CD8-positive, alpha-beta T cell (primary cell): ENCODE measurements at regions of chrX and their contacts with region 1.

Region 1: GRCh38 chrX:12974796-12975669 is at the start of gene TMSB4X:
- DNase-seq: peak; percentile 65 to 90 (median 81)
- ATAC-seq: peak; percentile 45
- H3K4me3 ChIP-seq: peak within 1 kb of the TSS; percentile 95 to 98
- H3K4me3 Mint-ChIP-seq: peak within 1 kb of the TSS; percentile 96
- H3K27ac ChIP-seq: peak within 1 kb of the TSS; percentile 87 to 99
- H3K27ac Mint-ChIP-seq: peak within 1 kb of the TSS; percentile 96
- H3K4me1 ChIP-seq: peaks cover 15% of the 10 kb centered on the region
- H3K4me1 Mint-ChIP-seq: peaks cover 32% of the 10 kb centered on the region
- H3K27me3 ChIP-seq: no peaks in the 10 kb centered on the region
- H3K27me3 Mint-ChIP-seq: no peaks in the 10 kb centered on the region
- CTCF ChIP-seq: no peak
- total RNA-seq, gene TMSB4X: 2,374 to 2,465 TPM

Region 2: DNA sequence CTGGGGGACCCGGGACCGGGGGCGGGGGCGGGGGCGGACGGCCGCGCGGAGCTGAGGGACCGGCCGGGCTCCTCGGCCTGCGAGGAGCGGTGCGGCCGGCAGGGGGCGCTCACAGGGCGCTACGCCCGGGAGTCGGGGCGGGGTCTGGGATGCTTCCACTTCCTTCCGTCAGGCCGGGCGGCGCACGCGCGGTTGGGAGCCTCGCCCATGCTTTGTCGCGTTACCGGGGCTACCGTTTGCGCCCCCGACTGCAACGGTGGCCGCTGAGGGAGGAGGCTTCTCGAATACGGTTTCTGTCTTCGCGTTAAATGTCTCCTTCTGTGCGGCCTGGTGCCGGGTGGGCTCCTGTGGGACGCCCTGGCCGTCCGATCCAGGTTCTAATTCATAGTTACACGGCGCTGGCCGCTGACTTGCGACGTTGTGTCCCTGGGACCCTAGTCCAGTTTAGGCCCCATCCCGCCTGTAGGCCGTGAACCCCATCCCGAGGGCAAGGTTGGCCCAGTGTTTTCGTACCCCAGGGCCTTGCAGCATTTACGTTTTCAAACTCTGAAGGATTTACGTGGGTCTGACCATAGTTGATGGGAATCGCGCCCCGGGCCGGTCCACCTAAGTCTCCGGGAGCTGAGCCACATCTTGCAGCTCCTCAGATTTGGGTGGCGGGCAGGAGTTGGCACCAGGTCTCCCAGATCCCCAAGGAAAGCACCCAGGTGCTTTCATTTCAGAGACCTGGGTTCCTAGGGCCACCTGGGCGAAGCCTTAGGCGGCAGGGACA is 1216.4 kb before region 1 on chrX:
- CTCF ChIA-PET with region 1: no interaction called
- POLR2A ChIA-PET with region 1: no interaction called
- intact Hi-C with region 1: loop called in 1 of 2 experiments (anchors 10 kb)
- DNase-seq: peak; percentile 76 to 93 (median 89)
- ATAC-seq: peak; percentile 61
- H3K4me3 ChIP-seq: peak overlapping the region; percentile 76 to 91
- H3K4me3 Mint-ChIP-seq: peak overlapping the region; percentile 88
- H3K27ac ChIP-seq: peak overlapping the region; percentile 87 to 93
- H3K27ac Mint-ChIP-seq: peak overlapping the region; percentile 97
- H3K4me1 ChIP-seq: peaks cover 18% of the 10 kb centered on the region
- H3K4me1 Mint-ChIP-seq: peaks cover 34% of the 10 kb centered on the region
- H3K27me3 ChIP-seq: no peaks in the 10 kb centered on the region
- H3K27me3 Mint-ChIP-seq: no peaks in the 10 kb centered on the region
- CTCF ChIP-seq: peak; percentile 62

Region 3: DNA sequence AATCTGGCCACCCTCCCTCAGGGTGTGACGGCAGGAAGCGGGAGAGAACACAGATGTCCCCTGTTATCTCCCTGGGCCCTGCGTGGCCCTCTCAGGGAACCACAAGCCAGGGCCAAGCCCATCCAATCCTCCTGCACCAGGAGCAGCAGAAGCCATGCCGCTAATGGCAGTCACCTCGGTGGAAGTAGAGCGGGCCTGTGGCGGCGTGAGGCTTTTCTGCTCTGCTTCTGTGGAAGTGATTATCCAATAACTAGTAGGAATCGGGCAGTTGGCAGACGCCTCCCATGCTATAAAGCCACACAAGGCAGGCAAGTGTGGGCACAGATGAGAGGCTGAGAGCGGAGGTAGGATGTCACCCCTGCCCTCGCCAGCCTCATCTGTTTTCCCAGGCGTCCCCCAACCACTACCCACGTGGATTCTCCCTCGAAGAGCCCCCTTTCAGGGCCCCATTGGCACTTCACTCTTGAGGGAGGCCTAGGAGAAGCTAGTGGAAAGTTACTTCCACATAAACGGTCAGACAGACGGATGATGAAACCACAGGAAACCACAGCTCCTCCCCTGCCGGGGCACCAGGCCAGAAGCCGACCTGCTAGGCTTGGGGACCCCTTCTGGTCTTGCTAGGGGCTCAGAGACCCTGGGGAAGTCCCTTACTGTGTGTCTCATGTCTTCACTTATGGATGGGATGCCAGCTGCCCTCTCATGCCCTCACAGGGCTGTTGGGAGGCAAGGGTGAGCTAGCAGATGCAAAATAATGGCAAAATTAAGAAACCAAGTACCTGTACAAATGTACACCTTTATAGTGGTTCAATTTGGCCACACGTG is 18.9 kb before region 1 on chrX:
- CTCF ChIA-PET with region 1: interaction called, 71 read pairs
- POLR2A ChIA-PET with region 1: interaction called, 559 read pairs
- intact Hi-C with region 1: loop called in 1 of 2 experiments (anchors 1 kb)
- DNase-seq: peak in 8 of 9 experiments; percentile 50 to 83 (median 68)
- ATAC-seq: peak; percentile 22
- H3K4me3 ChIP-seq: peak overlapping the region; percentile 34 to 43
- H3K4me3 Mint-ChIP-seq: peak overlapping the region; percentile 79
- H3K27ac ChIP-seq: peak overlapping the region; percentile 62 to 89
- H3K27ac Mint-ChIP-seq: peak overlapping the region; percentile 99
- H3K4me1 ChIP-seq: peaks cover 79% of the 10 kb centered on the region
- H3K4me1 Mint-ChIP-seq: peaks cover 74% of the 10 kb centered on the region
- H3K27me3 ChIP-seq: no peaks in the 10 kb centered on the region
- H3K27me3 Mint-ChIP-seq: no peaks in the 10 kb centered on the region
- CTCF ChIP-seq: no peak

Region 4: DNA sequence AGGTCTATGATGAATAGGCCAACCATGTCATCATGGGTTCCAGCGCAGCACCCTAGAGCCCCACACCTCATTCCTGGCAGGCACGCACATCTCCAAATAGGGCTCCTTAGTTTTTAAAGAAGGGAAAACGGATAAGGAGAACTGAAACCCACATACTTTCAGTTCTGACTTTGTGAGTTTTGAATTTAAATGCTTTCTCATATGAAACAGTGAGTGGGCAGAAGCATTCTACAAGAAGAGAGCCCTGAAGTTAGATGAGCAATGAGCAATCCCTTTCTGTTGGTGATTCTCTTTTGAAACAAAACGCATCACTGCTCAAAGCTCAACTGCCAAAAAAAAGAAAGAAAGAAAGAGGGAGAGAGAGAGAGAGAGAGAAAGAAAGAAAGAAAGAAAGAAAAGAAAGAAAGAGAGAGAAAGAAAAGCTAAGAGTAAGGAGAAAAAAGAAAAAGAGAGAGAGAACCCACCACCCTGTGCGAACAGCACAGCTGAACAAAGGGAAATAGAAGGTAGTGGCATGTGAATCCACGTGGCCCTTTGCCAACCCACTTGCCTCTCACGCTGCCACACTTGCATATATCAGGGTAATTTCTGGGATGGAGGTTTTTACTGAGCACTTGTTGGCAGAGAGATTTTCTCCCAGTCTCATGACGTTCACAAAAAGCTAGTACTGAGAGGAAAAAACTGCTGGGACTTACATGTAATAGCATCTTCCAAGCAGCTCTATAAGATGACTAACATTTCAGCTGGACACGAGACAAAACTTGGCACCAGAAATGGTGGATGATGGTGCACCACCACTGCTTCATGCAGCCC is 30.8 kb after region 1 on chrX:
- CTCF ChIA-PET with region 1: interaction called, 8 read pairs
- POLR2A ChIA-PET with region 1: interaction called, 95 read pairs
- intact Hi-C with region 1: loop called in 1 of 2 experiments (anchors 5 kb)
- DNase-seq: peak in 3 of 9 experiments; percentile 29 to 62 (median 43)
- ATAC-seq: peak; percentile 51
- H3K4me3 ChIP-seq: peak overlapping the region; percentile 1 to 3
- H3K4me3 Mint-ChIP-seq: peak overlapping the region; percentile 80
- H3K27ac ChIP-seq: peak overlapping the region in 1 of 2 experiments; percentile 58
- H3K27ac Mint-ChIP-seq: peak overlapping the region; percentile 98
- H3K4me1 ChIP-seq: peaks cover 66% of the 10 kb centered on the region
- H3K4me1 Mint-ChIP-seq: peaks cover 69% of the 10 kb centered on the region
- H3K27me3 ChIP-seq: no peaks in the 10 kb centered on the region
- H3K27me3 Mint-ChIP-seq: no peaks in the 10 kb centered on the region
- CTCF ChIP-seq: no peak

Region 5: GRCh38 chrX:13029341-13029740 is 54.3 kb after region 1 on chrX:
- CTCF ChIA-PET with region 1: interaction called, 7 read pairs
- POLR2A ChIA-PET with region 1: interaction called, 21 read pairs
- intact Hi-C with region 1: loop called in 1 of 2 experiments (anchors 5 kb)
- DNase-seq: peak in 5 of 9 experiments; percentile 18 to 50 (median 24)
- ATAC-seq: no peak
- H3K4me3 ChIP-seq: peak overlapping the region in 1 of 2 experiments; percentile 5
- H3K4me3 Mint-ChIP-seq: peak overlapping the region; percentile 54
- H3K27ac ChIP-seq: peak overlapping the region; percentile 30 to 56
- H3K27ac Mint-ChIP-seq: peak overlapping the region; percentile 96
- H3K4me1 ChIP-seq: peaks cover 69% of the 10 kb centered on the region
- H3K4me1 Mint-ChIP-seq: peaks cover 73% of the 10 kb centered on the region
- H3K27me3 ChIP-seq: no peaks in the 10 kb centered on the region
- H3K27me3 Mint-ChIP-seq: no peaks in the 10 kb centered on the region
- CTCF ChIP-seq: no peak

Region 6: DNA sequence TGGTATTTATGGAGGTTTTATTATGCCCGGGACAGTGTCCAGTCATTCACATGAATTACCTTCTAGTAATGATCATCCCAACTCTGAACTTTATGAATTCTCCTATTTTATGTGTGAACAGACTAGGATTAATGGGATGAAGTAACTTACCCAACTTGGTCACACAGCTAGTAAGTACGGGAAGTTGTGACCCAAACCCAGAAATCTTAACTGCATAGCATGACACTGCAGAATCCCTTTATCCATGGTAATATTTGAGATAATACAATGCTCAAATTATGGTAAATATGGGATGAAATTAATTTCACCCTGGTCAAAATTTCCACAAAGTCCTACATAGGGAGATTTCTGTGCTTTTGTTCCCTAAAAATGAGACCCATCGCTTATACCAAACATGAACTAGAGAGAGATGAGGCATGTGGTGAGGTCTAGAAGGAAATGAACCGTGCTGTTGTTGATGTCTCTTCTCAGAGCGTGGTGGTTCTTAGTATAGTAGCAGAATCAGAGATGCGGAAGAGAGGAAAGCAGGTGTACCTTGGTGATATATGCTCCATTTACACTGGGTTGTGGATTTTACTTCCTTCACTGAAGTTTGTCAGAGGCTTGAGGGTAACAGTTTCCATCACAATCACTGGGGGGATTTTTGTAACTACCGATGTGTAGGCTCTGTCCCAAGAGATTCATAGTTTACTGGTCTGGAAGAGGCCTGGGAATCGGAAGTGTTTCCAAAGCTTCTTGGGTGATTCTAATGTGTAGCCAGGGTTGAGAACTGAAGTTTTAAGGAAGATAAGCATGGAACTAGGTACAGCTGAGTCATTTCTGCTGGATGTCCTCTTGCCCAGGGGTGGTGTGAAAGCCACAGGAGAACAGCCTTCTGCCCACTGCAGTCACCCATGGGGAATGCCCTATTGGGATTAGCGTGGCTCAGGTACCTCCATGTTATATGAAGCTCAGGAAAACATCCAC is 99.5 kb after region 1 on chrX:
- CTCF ChIA-PET with region 1: interaction called, 3 read pairs
- POLR2A ChIA-PET with region 1: interaction called, 13 read pairs
- intact Hi-C with region 1: no loop called
- DNase-seq: peak in 2 of 9 experiments; percentile 43 to 65
- ATAC-seq: peak; percentile 91
- H3K4me3 ChIP-seq: no peak overlapping the region
- H3K4me3 Mint-ChIP-seq: peak overlapping the region; percentile 1
- H3K27ac ChIP-seq: peak overlapping the region in 1 of 2 experiments; percentile 48
- H3K27ac Mint-ChIP-seq: peak overlapping the region; percentile 93
- H3K4me1 ChIP-seq: peaks cover 63% of the 10 kb centered on the region
- H3K4me1 Mint-ChIP-seq: peaks cover 52% of the 10 kb centered on the region
- H3K27me3 ChIP-seq: no peaks in the 10 kb centered on the region
- H3K27me3 Mint-ChIP-seq: no peaks in the 10 kb centered on the region
- CTCF ChIP-seq: no peak

Region 7: GRCh38 chrX:13087322-13088155 is 112.5 kb after region 1 on chrX:
- CTCF ChIA-PET with region 1: interaction called, 66 read pairs
- POLR2A ChIA-PET with region 1: interaction called, 518 read pairs
- intact Hi-C with region 1: loop called (anchors 1 to 2 kb)
- DNase-seq: peak in 7 of 9 experiments; percentile 41 to 94 (median 75)
- ATAC-seq: peak; percentile 60
- H3K4me3 ChIP-seq: peak overlapping the region in 1 of 2 experiments; percentile 10
- H3K4me3 Mint-ChIP-seq: peak overlapping the region; percentile 80
- H3K27ac ChIP-seq: peak overlapping the region; percentile 57 to 96
- H3K27ac Mint-ChIP-seq: peak overlapping the region; percentile 98
- H3K4me1 ChIP-seq: peaks cover 90% of the 10 kb centered on the region
- H3K4me1 Mint-ChIP-seq: peaks cover 84% of the 10 kb centered on the region
- H3K27me3 ChIP-seq: no peaks in the 10 kb centered on the region
- H3K27me3 Mint-ChIP-seq: no peaks in the 10 kb centered on the region
- CTCF ChIP-seq: no peak

Region 8: DNA sequence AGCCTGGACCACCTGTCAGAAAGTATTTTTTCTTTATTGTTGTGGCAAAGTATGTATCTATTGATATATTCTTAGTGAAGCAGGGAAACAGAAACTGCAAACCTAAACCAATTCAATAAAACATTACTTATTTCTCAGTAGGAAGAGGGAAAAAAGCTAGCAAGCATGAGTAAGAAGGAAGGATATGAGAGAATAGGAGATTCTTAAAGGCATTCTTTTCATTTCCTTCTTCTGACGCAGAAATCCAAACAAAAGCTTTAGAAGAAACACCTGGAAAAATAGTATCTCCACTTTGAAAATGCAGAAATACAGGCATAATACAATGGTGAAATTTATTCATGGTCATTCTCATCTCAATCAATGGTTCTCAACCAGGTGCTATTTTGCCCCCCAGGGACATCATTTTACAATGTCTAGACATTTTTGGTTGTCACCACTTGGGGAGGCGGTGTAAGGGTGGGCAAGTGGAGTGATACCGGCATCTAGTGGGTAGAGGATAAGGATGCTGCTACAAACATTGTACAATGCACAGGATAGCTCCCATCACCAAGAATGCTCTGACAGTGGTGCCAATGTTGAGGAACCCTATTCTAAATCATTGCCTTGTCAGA is 366.6 kb after region 1 on chrX:
- CTCF ChIA-PET with region 1: no interaction called
- POLR2A ChIA-PET with region 1: no interaction called
- intact Hi-C with region 1: no loop called
- DNase-seq: peak in 2 of 9 experiments; percentile 5 to 7
- ATAC-seq: no peak
- H3K4me3 ChIP-seq: no peak overlapping the region
- H3K4me3 Mint-ChIP-seq: no peak overlapping the region
- H3K27ac ChIP-seq: no peak overlapping the region
- H3K27ac Mint-ChIP-seq: no peak overlapping the region
- H3K4me1 ChIP-seq: no peaks in the 10 kb centered on the region
- H3K4me1 Mint-ChIP-seq: no peaks in the 10 kb centered on the region
- H3K27me3 ChIP-seq: no peaks in the 10 kb centered on the region
- H3K27me3 Mint-ChIP-seq: no peaks in the 10 kb centered on the region
- CTCF ChIP-seq: no peak

Region 9: DNA sequence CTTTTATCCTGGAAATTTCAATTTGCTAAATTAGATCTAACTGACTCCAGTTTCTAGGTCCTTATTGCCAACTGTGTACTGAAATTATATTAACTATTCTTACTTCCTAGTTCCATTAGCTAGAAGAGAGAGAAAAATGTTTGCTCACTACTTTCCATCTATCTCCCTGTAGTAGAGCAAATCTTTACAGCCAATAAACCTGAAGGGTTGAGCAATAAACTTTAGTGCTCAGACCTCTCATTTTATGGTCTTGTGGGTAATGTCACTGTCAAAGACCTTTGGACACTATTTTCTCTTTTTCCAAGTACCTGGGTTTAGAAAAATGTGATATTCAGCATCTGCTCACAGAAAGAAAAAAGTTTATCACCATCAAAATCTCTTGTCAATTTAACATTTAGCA is 1292.2 kb after region 1 on chrX:
- CTCF ChIA-PET with region 1: no interaction called
- POLR2A ChIA-PET with region 1: no interaction called
- intact Hi-C with region 1: no loop called
- DNase-seq: no peak
- ATAC-seq: no peak
- H3K4me3 ChIP-seq: no peak overlapping the region
- H3K4me3 Mint-ChIP-seq: no peak overlapping the region
- H3K27ac ChIP-seq: no peak overlapping the region
- H3K27ac Mint-ChIP-seq: no peak overlapping the region
- H3K4me1 ChIP-seq: no peaks in the 10 kb centered on the region
- H3K4me1 Mint-ChIP-seq: no peaks in the 10 kb centered on the region
- H3K27me3 ChIP-seq: no peaks in the 10 kb centered on the region
- H3K27me3 Mint-ChIP-seq: no peaks in the 10 kb centered on the region
- CTCF ChIP-seq: no peak